B cell (primary cell): ENCODE measurements at regions of chr1 and their contacts with region 1.

Region 1: DNA sequence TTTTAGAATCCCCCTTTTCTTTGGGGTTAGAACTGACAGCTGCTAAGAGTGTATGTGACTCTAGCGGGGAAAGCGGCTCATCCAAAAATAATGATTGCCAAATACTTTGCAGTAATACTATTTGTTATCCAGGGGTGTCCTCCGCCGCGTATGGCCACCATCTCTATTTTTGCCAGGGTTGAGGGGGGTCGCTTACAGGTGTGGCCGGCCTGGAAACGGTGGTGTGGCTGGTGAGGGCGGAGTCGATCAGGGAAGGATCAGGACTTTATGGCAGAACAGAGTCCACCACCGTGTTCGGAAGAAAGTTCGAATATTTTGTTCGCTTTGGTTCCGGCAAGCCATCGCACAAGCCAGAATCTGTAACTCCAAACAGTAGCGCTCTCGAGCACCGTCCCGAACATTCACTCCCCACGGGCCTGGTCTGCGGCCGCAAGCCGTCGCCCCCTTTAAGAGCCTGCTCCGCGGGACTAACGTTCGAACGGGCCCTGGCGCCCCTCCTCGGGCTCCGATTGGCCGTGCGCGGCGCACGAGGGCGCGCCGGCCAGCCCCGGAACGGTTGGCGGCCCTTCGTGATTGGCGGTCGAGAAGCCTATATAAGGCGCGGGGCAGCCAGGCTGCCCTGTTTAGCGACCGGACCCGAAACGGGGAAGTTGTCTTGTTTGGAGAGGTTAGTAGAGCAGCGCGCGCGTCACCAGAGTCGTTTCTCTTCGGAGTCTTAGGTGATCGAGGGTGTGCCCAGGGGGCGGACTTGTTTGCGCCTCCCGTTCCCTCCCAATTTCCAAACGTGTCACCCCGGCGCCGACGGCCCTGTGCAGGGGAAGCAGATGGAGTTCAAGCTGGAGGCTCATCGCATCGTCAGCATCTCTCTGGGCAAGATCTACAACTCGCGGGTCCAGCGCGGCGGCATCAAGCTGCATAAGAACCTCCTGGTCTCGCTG is at the start of gene IER5:
- DNase-seq: peak; percentile 99
- ATAC-seq: peak; percentile 74
- H3K4me3 ChIP-seq: peak within 1 kb of the TSS; percentile 94 to 99 (median 95)
- H3K4me3 Mint-ChIP-seq: peak within 1 kb of the TSS; percentile 100
- H3K27ac ChIP-seq: peak within 1 kb of the TSS; percentile 98 to 99
- H3K27ac Mint-ChIP-seq: peak within 1 kb of the TSS; percentile 100
- H3K4me1 ChIP-seq: peaks cover 42 to 48% of the 10 kb centered on the region in 2 donors
- H3K4me1 Mint-ChIP-seq: peaks cover 49% of the 10 kb centered on the region
- H3K27me3 ChIP-seq: no peaks in the 10 kb centered on the region
- H3K27me3 Mint-ChIP-seq: no peaks in the 10 kb centered on the region
- CTCF ChIP-seq: no peak
- total RNA-seq, gene IER5: 96.9 and 98.1 TPM in 2 replicates

Region 2: GRCh38 chr1:179781962-179782361 is 1306.4 kb before region 1 on chr1:
- CTCF ChIA-PET with region 1: no interaction called
- POLR2A ChIA-PET with region 1: no interaction called
- intact Hi-C with region 1: no loop called
- DNase-seq: no peak
- ATAC-seq: no peak
- H3K4me3 ChIP-seq: no peak overlapping the region
- H3K4me3 Mint-ChIP-seq: no peak overlapping the region
- H3K27ac ChIP-seq: no peak overlapping the region
- H3K27ac Mint-ChIP-seq: no peak overlapping the region
- H3K4me1 ChIP-seq: no peaks in the 10 kb centered on the region
- H3K4me1 Mint-ChIP-seq: no peaks in the 10 kb centered on the region
- H3K27me3 ChIP-seq: peaks cover 0 to 3% (median 1%) of the 10 kb centered on the region in 4 experiments
- H3K27me3 Mint-ChIP-seq: peaks cover 21% of the 10 kb centered on the region
- CTCF ChIP-seq: no peak

Region 3: GRCh38 chr1:180515864-180516388 is 572.4 kb before region 1 on chr1:
- CTCF ChIA-PET with region 1: interaction called, 3 read pairs
- POLR2A ChIA-PET with region 1: no interaction called
- intact Hi-C with region 1: loop called (anchors 5 kb)
- DNase-seq: peak; percentile 72
- ATAC-seq: peak; percentile 88
- H3K4me3 ChIP-seq: no peak overlapping the region
- H3K4me3 Mint-ChIP-seq: no peak overlapping the region
- H3K27ac ChIP-seq: no peak overlapping the region
- H3K27ac Mint-ChIP-seq: no peak overlapping the region
- H3K4me1 ChIP-seq: no peaks in the 10 kb centered on the region
- H3K4me1 Mint-ChIP-seq: peaks cover 2% of the 10 kb centered on the region
- H3K27me3 ChIP-seq: peaks cover 0 to 10% (median 0%) of the 10 kb centered on the region in 4 experiments
- H3K27me3 Mint-ChIP-seq: peaks cover 20% of the 10 kb centered on the region
- CTCF ChIP-seq: peak; percentile 94

Region 4: DNA sequence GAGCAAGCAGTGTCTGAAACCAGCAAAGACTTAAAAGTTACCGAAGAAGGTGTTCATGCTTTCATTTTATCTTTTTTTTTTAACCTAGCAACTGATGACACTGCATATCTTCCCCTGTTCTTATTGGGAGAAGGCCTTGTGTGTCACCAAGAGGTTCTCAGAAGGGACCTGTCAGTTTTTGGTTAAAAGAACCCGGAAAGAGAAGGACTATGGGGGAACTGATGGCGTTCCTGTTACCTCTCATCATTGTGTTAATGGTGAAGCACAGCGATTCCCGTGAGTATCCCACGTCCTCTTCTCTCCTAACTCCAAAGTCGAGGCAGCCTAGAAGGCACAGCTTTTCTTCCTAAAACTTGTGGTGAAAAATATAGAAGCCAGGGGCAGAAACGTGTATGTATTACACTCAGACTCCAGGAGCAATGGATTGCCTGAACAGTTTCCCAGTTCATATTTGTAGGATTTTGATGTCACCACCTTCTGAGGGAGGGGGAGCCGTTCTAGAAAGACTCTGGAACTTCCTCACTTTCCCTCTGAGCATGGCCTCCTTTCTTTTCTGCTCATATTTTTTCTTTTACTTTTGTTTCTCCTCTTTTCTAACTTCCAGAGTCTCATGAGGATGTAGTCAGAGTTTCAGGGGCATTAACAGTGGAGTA is 54.4 kb before region 1 on chr1 and contains the start of gene MR1:
- CTCF ChIA-PET with region 1: interaction called, 34 read pairs
- POLR2A ChIA-PET with region 1: interaction called, 7 read pairs
- intact Hi-C with region 1: loop called (anchors 2 kb)
- DNase-seq: peak; percentile 92
- ATAC-seq: peak; percentile 97
- H3K4me3 ChIP-seq: peak within 1 kb of the TSS; percentile 77 to 94 (median 90)
- H3K4me3 Mint-ChIP-seq: peak within 1 kb of the TSS; percentile 95
- H3K27ac ChIP-seq: peak within 1 kb of the TSS; percentile 94 to 96
- H3K27ac Mint-ChIP-seq: peak within 1 kb of the TSS; percentile 93
- H3K4me1 ChIP-seq: peaks cover 39 to 49% of the 10 kb centered on the region in 2 donors
- H3K4me1 Mint-ChIP-seq: peaks cover 54% of the 10 kb centered on the region
- H3K27me3 ChIP-seq: no peaks in the 10 kb centered on the region
- H3K27me3 Mint-ChIP-seq: no peaks in the 10 kb centered on the region
- CTCF ChIP-seq: no peak
- total RNA-seq, gene MR1: 26.1 and 28.2 TPM in 2 replicates

Region 5: DNA sequence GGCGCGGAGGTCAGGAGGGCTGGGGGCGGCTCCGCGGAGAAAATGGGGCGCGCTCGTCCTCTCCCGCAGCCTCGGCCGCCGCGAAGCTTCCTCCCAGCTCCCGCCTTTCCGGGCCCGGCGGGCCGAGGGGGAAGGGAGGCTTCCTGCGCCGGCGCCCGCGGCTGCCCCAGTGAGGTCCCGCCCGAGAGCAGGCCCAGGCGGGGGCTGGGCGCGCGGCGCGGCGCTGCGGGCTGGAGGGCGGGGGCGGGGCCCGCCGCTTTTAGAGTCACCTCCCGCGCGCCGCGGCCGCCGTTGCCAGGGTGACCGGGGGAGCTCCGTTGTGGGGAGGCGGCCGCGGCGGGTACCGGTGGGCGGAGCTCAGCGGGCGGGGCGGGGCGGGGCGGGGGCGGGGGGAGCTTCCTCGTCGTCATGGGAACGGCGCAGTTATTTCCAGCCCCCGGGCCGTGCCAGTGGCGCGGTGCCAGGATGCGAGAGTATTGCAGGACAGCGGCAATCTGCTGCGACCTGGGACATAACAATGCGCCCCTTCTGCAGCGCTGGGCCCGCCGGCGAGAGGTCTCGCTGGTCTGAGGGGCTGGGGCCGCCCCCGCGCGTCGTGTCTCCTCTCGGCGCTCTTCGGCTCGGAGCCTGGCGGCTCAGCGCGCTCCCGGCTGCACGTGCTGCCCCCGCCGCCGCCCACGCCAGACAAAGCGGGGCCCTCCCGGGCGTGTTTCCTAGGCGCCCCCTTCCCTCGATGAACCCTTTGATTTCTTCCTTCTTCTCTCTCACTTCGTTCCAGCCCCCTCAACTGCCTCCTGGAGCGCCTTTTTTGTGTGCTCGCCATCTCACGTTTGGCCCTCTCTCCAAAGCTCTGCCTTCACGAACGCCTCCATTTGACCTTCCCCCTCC is 17.0 kb after region 1 on chr1:
- CTCF ChIA-PET with region 1: interaction called, 141 read pairs
- POLR2A ChIA-PET with region 1: interaction called, 98 read pairs
- intact Hi-C with region 1: loop called (anchors 1 kb)
- DNase-seq: peak; percentile 94
- ATAC-seq: peak; percentile 86
- H3K4me3 ChIP-seq: peak overlapping the region in 4 of 5 experiments; percentile 78 to 87 (median 83)
- H3K4me3 Mint-ChIP-seq: peak overlapping the region; percentile 90
- H3K27ac ChIP-seq: peak overlapping the region; percentile 66 to 85
- H3K27ac Mint-ChIP-seq: peak overlapping the region; percentile 87
- H3K4me1 ChIP-seq: peaks cover 16 to 23% of the 10 kb centered on the region in 2 donors
- H3K4me1 Mint-ChIP-seq: peaks cover 37% of the 10 kb centered on the region
- H3K27me3 ChIP-seq: no peaks in the 10 kb centered on the region
- H3K27me3 Mint-ChIP-seq: no peaks in the 10 kb centered on the region
- CTCF ChIP-seq: no peak

Region 6: DNA sequence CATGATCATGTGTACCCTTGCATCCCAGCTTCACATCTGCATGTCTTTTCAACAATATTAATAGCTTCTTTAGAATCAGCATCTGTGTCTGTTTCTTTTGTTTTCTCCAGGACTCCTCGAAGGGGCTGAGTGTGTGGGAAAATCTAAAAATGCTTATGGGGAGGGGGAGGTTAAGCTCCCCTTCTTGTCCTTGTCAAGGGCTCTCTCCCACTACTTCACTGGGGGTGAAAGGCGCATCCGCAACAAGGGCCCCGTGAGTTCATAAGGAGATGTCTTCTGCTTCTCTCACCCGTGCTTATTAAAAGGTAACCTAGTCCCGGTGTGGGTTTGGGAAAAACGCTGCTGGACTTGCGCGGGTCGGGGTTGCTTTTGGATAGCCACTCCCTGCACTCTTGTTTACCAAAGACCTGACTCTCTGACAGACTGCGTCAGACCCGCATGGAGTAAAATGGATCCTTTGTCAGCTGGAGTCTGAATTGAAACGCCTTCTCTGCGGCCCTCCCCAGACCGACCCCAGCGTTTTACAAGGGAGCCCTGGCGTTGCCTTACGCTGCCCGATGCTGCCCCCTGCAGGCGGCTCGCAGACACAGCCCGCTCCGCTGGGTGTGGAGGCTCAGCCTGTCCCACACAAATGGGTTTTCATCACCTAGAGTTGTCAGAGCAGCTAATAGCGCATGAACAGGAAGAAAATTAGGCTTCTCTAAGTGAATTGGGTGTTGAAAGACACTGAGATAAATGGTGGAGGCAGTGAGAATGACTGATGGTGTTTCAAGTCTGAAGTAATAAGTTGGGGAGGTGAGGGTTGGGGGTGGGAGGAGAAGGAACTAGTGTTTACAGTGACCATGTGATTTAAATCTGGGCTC is 54.0 kb after region 1 on chr1:
- CTCF ChIA-PET with region 1: interaction called, 672 read pairs
- POLR2A ChIA-PET with region 1: interaction called, 109 read pairs
- intact Hi-C with region 1: loop called (anchors 1 kb)
- DNase-seq: peak; percentile 89
- ATAC-seq: peak; percentile 97
- H3K4me3 ChIP-seq: no peak overlapping the region
- H3K4me3 Mint-ChIP-seq: peak overlapping the region; percentile 69
- H3K27ac ChIP-seq: no peak overlapping the region
- H3K27ac Mint-ChIP-seq: peak overlapping the region; percentile 60
- H3K4me1 ChIP-seq: peaks cover 36 to 41% of the 10 kb centered on the region in 2 donors
- H3K4me1 Mint-ChIP-seq: peaks cover 51% of the 10 kb centered on the region
- H3K27me3 ChIP-seq: no peaks in the 10 kb centered on the region
- H3K27me3 Mint-ChIP-seq: no peaks in the 10 kb centered on the region
- CTCF ChIP-seq: peak; percentile 96

Region 7: GRCh38 chr1:181166377-181167196 is 78.2 kb after region 1 on chr1:
- CTCF ChIA-PET with region 1: interaction called, 60 read pairs
- POLR2A ChIA-PET with region 1: interaction called, 4 read pairs
- intact Hi-C with region 1: loop called (anchors 1 kb)
- DNase-seq: peak; percentile 82
- ATAC-seq: peak; percentile 99
- H3K4me3 ChIP-seq: no peak overlapping the region
- H3K4me3 Mint-ChIP-seq: no peak overlapping the region
- H3K27ac ChIP-seq: no peak overlapping the region
- H3K27ac Mint-ChIP-seq: no peak overlapping the region
- H3K4me1 ChIP-seq: peaks cover 2 to 6% of the 10 kb centered on the region in 2 donors
- H3K4me1 Mint-ChIP-seq: peaks cover 3% of the 10 kb centered on the region
- H3K27me3 ChIP-seq: peaks cover 0 to 2% (median 0%) of the 10 kb centered on the region in 4 experiments
- H3K27me3 Mint-ChIP-seq: no peaks in the 10 kb centered on the region
- CTCF ChIP-seq: peak; percentile 94

Region 8: DNA sequence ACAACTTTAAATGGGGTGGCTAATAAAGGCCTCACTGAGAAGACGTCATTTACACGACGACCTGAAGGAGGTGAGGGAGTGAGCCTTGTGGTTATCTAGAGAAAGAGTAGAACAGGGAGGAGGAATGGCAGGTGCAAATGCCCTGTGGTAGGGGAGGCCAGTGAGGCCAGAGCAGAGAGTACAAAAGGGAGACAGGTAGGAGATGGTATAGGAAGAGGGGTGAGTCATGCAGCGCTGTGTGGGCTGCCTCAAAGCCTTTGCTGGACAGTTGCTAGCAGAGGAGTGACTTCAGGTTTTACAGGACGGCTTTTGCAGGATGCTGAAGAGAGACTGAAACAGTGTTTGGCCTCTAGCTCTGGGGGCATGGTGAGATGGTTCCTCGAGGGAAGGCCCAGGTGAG is 116.2 kb after region 1 on chr1:
- CTCF ChIA-PET with region 1: no interaction called
- POLR2A ChIA-PET with region 1: no interaction called
- intact Hi-C with region 1: no loop called
- DNase-seq: no peak
- ATAC-seq: no peak
- H3K4me3 ChIP-seq: no peak overlapping the region
- H3K4me3 Mint-ChIP-seq: no peak overlapping the region
- H3K27ac ChIP-seq: no peak overlapping the region
- H3K27ac Mint-ChIP-seq: no peak overlapping the region
- H3K4me1 ChIP-seq: no peaks in the 10 kb centered on the region
- H3K4me1 Mint-ChIP-seq: no peaks in the 10 kb centered on the region
- H3K27me3 ChIP-seq: no peaks in the 10 kb centered on the region
- H3K27me3 Mint-ChIP-seq: peaks cover 12% of the 10 kb centered on the region
- CTCF ChIP-seq: no peak

Region 9: DNA sequence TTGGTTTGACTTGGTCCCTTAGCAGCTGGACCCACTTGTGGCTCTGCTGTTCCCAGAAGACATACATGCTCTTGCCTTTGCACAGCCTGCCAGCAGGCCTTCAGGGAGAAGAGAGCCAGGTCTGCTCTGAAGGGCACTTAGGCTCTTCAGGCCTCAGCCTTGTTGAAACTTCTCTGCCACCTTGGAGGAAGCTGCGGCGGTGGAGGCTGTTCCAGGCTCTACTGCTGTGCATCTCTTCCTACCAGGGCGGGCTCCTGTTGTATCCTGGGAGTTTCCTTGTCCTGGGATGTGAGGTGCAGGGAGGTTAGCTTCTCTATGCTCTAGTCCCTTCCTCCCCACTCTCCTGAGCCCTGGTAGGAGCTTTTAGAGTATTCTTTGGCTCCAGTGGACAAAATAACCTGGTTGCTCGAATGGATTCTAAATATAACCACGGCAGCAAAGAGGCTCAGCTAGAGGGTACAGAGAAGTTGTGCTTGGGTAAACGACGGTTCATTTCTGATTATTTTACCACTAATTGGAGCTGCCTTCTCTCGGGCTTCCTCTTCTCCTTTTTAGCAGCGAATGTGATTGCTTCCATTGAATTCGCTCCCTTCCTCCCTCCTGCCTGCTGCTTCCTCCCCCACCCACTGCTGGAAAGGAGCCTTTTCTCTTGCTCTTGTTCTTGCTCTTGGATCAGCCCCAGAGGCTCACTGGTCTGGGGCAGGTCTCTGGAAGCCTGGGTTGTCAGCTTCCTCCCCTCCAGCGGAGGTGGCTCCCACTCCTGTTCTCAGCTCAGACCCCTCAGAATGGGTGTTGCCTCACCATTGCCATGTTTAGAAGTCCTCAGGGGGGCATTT is 268.4 kb after region 1 on chr1:
- CTCF ChIA-PET with region 1: no interaction called
- POLR2A ChIA-PET with region 1: no interaction called
- intact Hi-C with region 1: no loop called
- DNase-seq: no peak
- ATAC-seq: no peak
- H3K4me3 ChIP-seq: no peak overlapping the region
- H3K4me3 Mint-ChIP-seq: no peak overlapping the region
- H3K27ac ChIP-seq: no peak overlapping the region
- H3K27ac Mint-ChIP-seq: no peak overlapping the region
- H3K4me1 ChIP-seq: no peaks in the 10 kb centered on the region
- H3K4me1 Mint-ChIP-seq: no peaks in the 10 kb centered on the region
- H3K27me3 ChIP-seq: peaks cover 0 to 8% (median 0%) of the 10 kb centered on the region in 4 experiments
- H3K27me3 Mint-ChIP-seq: peaks cover 18% of the 10 kb centered on the region
- CTCF ChIP-seq: no peak

Region 10: GRCh38 chr1:181514298-181515290 is 426.2 kb after region 1 on chr1:
- CTCF ChIA-PET with region 1: no interaction called
- POLR2A ChIA-PET with region 1: no interaction called
- intact Hi-C with region 1: no loop called
- DNase-seq: no peak
- ATAC-seq: peak; percentile 14
- H3K4me3 ChIP-seq: no peak overlapping the region
- H3K4me3 Mint-ChIP-seq: no peak overlapping the region
- H3K27ac ChIP-seq: no peak overlapping the region
- H3K27ac Mint-ChIP-seq: no peak overlapping the region
- H3K4me1 ChIP-seq: peaks cover 0 to 7% of the 10 kb centered on the region in 2 donors
- H3K4me1 Mint-ChIP-seq: peaks cover 9% of the 10 kb centered on the region
- H3K27me3 ChIP-seq: no peaks in the 10 kb centered on the region
- H3K27me3 Mint-ChIP-seq: no peaks in the 10 kb centered on the region
- CTCF ChIP-seq: no peak